ENCODE measurements at regions of chr9 and their contacts with region 1.

Region 1: GRCh38 chr9:5628530-5629311 is at the start of gene RIC1:
- DNase-seq: peak; percentile 94
- H3K4me3 Mint-ChIP-seq: peak within 1 kb of the TSS; percentile 98
- H3K27ac Mint-ChIP-seq: peak within 1 kb of the TSS; percentile 100
- H3K4me1 Mint-ChIP-seq: peaks cover 62% of the 10 kb centered on the region
- H3K27me3 Mint-ChIP-seq: no peaks in the 10 kb centered on the region
- total RNA-seq, gene RIC1: 14.1 to 15.0 TPM

Region 2: DNA sequence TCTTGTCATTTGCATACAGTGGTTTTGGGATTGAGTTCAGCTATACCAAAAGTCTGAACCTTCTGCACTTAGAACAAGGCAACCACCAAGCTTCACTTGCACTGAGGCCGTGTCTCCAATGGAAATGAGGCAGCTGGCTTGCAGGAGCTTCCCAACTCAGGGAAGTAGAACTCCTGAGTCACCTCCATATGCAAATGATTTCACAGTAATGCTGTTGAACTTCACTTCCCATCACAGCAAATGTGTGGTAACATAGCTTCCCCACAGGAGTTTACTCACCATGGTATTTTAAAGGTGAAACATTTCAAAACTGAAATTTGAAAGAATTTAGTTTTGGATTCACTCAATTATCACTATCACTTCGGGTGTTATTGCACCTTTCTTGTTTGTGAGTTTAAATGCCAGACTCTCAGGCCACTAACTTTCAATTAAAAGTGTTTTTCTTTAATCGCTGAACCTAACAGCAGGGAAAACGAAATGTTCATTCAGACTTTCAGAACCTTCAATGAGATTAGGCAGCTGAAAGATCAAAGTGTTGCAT is 169.4 kb before region 1 on chr9:
- CTCF ChIA-PET with region 1: no interaction called
- POLR2A ChIA-PET with region 1: interaction called, 5 read pairs
- intact Hi-C with region 1: loop called (anchors 2 kb)
- DNase-seq: peak; percentile 57
- H3K4me3 Mint-ChIP-seq: peak overlapping the region; percentile 68
- H3K27ac Mint-ChIP-seq: peak overlapping the region; percentile 87
- H3K4me1 Mint-ChIP-seq: peaks cover 73% of the 10 kb centered on the region
- H3K27me3 Mint-ChIP-seq: no peaks in the 10 kb centered on the region

Region 3: DNA sequence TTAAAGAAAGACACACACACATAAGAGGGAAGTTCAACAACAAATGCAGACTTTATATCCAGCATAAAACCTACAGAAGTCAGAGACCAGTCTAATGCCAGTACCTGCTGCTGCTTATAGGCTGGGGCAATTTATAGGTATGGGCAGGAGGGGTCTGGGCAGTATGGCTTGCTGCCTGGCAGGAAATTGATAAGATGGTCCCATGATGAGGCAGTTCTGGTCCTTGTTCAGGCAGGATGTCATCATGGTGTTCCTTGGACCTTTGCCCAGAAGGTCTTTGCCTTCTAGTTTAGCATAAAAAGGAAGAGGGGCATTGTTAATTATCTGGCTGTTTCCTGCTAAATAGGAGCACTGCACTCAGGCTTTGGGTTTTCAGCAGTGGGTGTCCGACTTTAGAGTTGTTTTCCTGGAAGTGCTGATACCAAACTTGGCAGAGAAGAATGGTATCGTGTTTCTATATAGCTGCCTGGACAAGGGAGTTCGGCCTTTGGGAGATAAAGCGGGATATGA is 128.8 kb before region 1 on chr9:
- CTCF ChIA-PET with region 1: no interaction called
- POLR2A ChIA-PET with region 1: no interaction called
- intact Hi-C with region 1: no loop called
- DNase-seq: no peak
- H3K4me3 Mint-ChIP-seq: no peak overlapping the region
- H3K27ac Mint-ChIP-seq: no peak overlapping the region
- H3K4me1 Mint-ChIP-seq: peaks cover 7% of the 10 kb centered on the region
- H3K27me3 Mint-ChIP-seq: no peaks in the 10 kb centered on the region

Region 4: GRCh38 chr9:5617749-5618148 is 11.0 kb before region 1 on chr9:
- CTCF ChIA-PET with region 1: no interaction called
- POLR2A ChIA-PET with region 1: no interaction called
- intact Hi-C with region 1: loop called (anchors 1 kb)
- DNase-seq: no peak
- H3K4me3 Mint-ChIP-seq: no peak overlapping the region
- H3K27ac Mint-ChIP-seq: no peak overlapping the region
- H3K4me1 Mint-ChIP-seq: peaks cover 33% of the 10 kb centered on the region
- H3K27me3 Mint-ChIP-seq: no peaks in the 10 kb centered on the region

Region 5: DNA sequence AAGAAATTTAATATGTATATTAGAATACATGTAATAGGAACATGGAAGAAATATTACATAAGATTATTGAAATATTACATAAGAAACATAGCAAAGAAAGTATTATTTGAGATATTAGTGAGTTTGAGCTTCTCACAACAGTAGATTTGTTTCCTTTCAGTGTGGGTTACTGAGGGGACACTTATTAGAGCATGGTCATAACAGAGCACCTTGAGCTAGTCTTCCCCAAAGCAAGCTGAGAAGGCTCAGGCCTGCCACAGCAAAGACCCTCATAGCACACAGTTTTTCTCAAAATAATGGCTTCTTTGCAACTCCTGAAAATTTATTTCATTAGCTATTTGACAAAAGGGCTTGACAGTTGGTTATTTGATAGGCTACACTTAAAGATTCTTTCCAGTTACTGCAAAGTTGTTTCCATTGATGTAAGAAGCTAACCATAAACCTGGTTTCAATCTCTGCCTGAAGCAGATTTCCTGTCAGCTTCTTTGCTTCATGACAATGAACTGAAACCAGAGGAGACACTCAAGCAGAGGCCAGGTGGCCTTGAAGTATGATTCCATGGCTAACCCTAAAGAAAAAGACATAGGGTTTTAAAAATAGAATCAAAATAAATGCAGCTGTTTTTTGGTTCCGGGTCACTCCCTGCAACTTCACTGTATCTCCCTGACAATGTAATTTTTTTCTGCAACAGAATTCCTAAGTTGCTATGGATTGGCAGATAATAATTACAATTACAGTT is 135.6 kb after region 1 on chr9:
- CTCF ChIA-PET with region 1: no interaction called
- POLR2A ChIA-PET with region 1: no interaction called
- intact Hi-C with region 1: loop called (anchors 2 kb)
- DNase-seq: peak; percentile 24
- H3K4me3 Mint-ChIP-seq: no peak overlapping the region
- H3K27ac Mint-ChIP-seq: peak overlapping the region; percentile 31
- H3K4me1 Mint-ChIP-seq: peaks cover 58% of the 10 kb centered on the region
- H3K27me3 Mint-ChIP-seq: no peaks in the 10 kb centered on the region

Region 6: GRCh38 chr9:6008169-6008979 is 379.7 kb after region 1 on chr9:
- CTCF ChIA-PET with region 1: no interaction called
- POLR2A ChIA-PET with region 1: interaction called, 5 read pairs
- intact Hi-C with region 1: loop called (anchors 2 kb)
- DNase-seq: peak; percentile 97
- H3K4me3 Mint-ChIP-seq: peak overlapping the region; percentile 74
- H3K27ac Mint-ChIP-seq: peak overlapping the region; percentile 79
- H3K4me1 Mint-ChIP-seq: peaks cover 56% of the 10 kb centered on the region
- H3K27me3 Mint-ChIP-seq: no peaks in the 10 kb centered on the region

Measured in activated CD4-positive, alpha-beta memory T cell treated with anti-CD3 and anti-CD28 coated beads for 36 hours (primary cell).